ENCODE measurements at regions of chr20 and their contacts with region 1.

Region 1: GRCh38 chr20:38893565-38894090 is 32.6 kb upstream of the FAM83D start:
- DNase-seq: peak; percentile 72
- H3K4me3 Mint-ChIP-seq: no peak overlapping the region
- H3K27ac Mint-ChIP-seq: peak overlapping the region; percentile 62
- H3K4me1 Mint-ChIP-seq: peaks cover 45% of the 10 kb centered on the region
- H3K27me3 Mint-ChIP-seq: no peaks in the 10 kb centered on the region

Region 2: GRCh38 chr20:38645980-38646858 is 247.4 kb before region 1 on chr20:
- intact Hi-C with region 1: loop called (anchors 2 kb)
- DNase-seq: peak; percentile 87
- H3K4me3 Mint-ChIP-seq: peak overlapping the region; percentile 77
- H3K27ac Mint-ChIP-seq: peak overlapping the region; percentile 23
- H3K4me1 Mint-ChIP-seq: peaks cover 7% of the 10 kb centered on the region
- H3K27me3 Mint-ChIP-seq: peaks cover 33% of the 10 kb centered on the region

Region 3: GRCh38 chr20:38730989-38731737 is 162.5 kb before region 1 on chr20:
- intact Hi-C with region 1: loop called (anchors 5 kb)
- DNase-seq: peak; percentile 62
- H3K4me3 Mint-ChIP-seq: peak overlapping the region; percentile 28
- H3K27ac Mint-ChIP-seq: peak overlapping the region; percentile 46
- H3K4me1 Mint-ChIP-seq: peaks cover 33% of the 10 kb centered on the region
- H3K27me3 Mint-ChIP-seq: peaks cover 85% of the 10 kb centered on the region

Region 4: GRCh38 chr20:38748097-38748860 is 145.3 kb before region 1 on chr20 and contains the start of gene ACTR5:
- intact Hi-C with region 1: loop called (anchors 5 kb)
- DNase-seq: peak; percentile 94
- H3K4me3 Mint-ChIP-seq: peak within 1 kb of the TSS; percentile 93
- H3K27ac Mint-ChIP-seq: peak within 1 kb of the TSS; percentile 95
- H3K4me1 Mint-ChIP-seq: peaks cover 22% of the 10 kb centered on the region
- H3K27me3 Mint-ChIP-seq: peaks cover 6% of the 10 kb centered on the region
- total RNA-seq, gene ACTR5: 12.1 and 13.2 TPM in 2 replicates

Region 5: DNA sequence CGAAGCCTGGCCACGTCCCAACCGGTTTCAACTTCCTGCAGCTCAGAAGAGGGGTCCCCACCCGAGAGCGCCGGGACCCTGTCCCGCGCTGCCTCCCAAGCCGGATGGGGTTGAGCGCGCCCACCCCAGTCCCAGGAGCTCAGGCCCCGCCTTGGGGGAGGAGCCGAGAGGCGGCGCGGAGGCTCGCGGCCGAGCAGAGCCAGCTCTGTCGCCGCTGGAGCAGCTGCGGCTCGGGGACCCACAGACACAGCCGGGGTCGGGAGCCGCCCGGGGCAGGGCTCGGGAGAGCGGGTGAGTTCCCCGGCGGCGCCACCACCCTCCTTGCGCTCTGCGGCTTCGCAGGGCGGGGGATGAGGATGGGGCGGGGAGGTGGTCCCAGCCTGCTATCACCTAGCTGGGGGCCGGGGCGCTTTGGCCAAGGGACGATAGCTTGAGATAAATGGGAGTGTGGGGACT is 88.1 kb before region 1 on chr20 and contains the start of gene PPP1R16B:
- intact Hi-C with region 1: loop called (anchors 1 kb)
- DNase-seq: peak; percentile 78
- H3K4me3 Mint-ChIP-seq: peak within 1 kb of the TSS; percentile 91
- H3K27ac Mint-ChIP-seq: peak within 1 kb of the TSS; percentile 98
- H3K4me1 Mint-ChIP-seq: peaks cover 48% of the 10 kb centered on the region
- H3K27me3 Mint-ChIP-seq: no peaks in the 10 kb centered on the region
- total RNA-seq, gene PPP1R16B: 109 and 111 TPM in 2 replicates

Region 6: GRCh38 chr20:38833857-38834164 is 59.8 kb before region 1 on chr20:
- intact Hi-C with region 1: loop called (anchors 1 kb)
- DNase-seq: no peak
- H3K4me3 Mint-ChIP-seq: peak overlapping the region; percentile 42
- H3K27ac Mint-ChIP-seq: peak overlapping the region; percentile 87
- H3K4me1 Mint-ChIP-seq: peaks cover 65% of the 10 kb centered on the region
- H3K27me3 Mint-ChIP-seq: no peaks in the 10 kb centered on the region

Measured in activated T-helper 2 cell treated with anti-CD3 and anti-CD28 coated beads, Interferon-gamma antibody, Interleukin-2, Interleukin-4, amounts not matched to agents 10 μg/mL and 5 μg/mL and 100 μg/mL, durations not matched to agents 14 hours and 24 hours and 36 hours (primary cell).